Activated T-helper 1 cell treated with anti-CD3 and anti-CD28 coated beads, Interleukin-12 subunit alpha, Interleukin-12 subunit beta, Interleukin-2, Interleukin-4 antibody, amounts not matched to agents 30 ng/mL and 10 ng/mL and 1 ng/mL, durations not matched to agents 14 hours and 24 hours and 36 hours (primary cell): ENCODE measurements at regions of chr9 and their contacts with region 1.

Region 1: GRCh38 chr9:89536145-89536574 is 38.2 kb upstream of the SEMA4D start:
- DNase-seq: peak; percentile 41
- H3K4me3 Mint-ChIP-seq: peak overlapping the region; percentile 30
- H3K27ac Mint-ChIP-seq: peak overlapping the region; percentile 90
- H3K4me1 Mint-ChIP-seq: peaks cover 82% of the 10 kb centered on the region
- H3K27me3 Mint-ChIP-seq: no peaks in the 10 kb centered on the region

Region 2: DNA sequence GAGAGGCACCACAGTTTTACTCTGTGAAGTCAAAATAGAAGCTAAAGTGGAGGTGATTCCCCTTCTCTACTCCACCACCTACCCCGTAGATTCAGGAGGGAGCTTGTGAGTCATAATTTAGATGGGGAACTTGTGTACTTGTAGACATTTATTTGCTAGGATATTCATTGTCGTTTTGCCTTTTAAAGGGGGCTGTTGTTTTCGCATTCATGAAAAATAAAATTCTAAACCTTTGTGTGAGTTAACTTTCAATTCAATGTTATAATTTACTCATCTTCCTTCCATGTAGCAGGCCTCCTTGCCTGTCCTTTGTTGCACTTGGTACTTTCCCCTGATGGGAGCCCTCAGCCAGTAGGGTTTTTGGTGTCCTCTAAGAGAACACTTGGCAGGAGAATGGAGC is 195.8 kb before region 1 on chr9:
- intact Hi-C with region 1: loop called (anchors 5 kb)
- DNase-seq: no peak
- H3K4me3 Mint-ChIP-seq: no peak overlapping the region
- H3K27ac Mint-ChIP-seq: peak overlapping the region; percentile 60
- H3K4me1 Mint-ChIP-seq: peaks cover 35% of the 10 kb centered on the region
- H3K27me3 Mint-ChIP-seq: no peaks in the 10 kb centered on the region

Region 3: DNA sequence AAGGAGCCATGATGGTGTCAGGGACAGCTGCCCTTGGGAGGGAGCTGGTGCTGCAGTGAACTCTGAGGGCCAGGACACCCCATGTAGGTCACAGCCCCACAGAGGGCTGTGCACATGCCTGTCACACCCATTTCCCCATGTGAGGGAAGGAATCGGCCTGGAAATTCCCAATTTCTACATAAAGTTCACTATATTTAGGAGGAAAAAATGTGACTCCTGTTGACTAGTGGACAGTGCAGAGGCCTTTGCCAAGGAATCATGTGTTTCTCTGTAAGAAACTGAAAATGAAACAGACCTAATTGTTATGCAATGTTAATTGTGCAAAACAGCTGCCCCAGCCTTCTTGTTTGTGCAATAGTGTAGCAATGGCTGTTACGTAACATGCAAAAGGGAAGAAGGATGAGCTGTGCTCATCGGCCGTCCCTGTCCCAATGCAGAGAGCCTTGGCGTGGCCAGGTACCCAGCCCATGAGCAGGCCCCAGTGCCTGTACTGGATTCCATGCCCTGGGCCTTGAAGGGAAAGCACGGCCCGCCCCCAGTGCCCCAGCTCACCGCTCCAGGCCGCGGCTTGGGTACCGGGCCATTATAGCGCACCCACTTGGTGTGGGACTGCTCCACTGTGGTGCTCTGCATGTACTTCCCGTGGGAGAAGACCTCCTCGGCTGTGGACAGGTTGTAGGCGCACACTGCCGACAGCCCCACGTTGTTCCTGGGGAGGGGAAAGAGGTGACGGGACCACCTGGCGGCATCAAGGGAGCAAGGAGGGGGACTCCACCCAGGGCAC is 147.9 kb before region 1 on chr9:
- intact Hi-C with region 1: no loop called
- DNase-seq: no peak
- H3K4me3 Mint-ChIP-seq: no peak overlapping the region
- H3K27ac Mint-ChIP-seq: no peak overlapping the region
- H3K4me1 Mint-ChIP-seq: peaks cover 33% of the 10 kb centered on the region
- H3K27me3 Mint-ChIP-seq: peaks cover 2% of the 10 kb centered on the region

Region 4: GRCh38 chr9:89466451-89467277 is 69.5 kb before region 1 on chr9:
- intact Hi-C with region 1: loop called (anchors 1 kb)
- DNase-seq: peak; percentile 44
- H3K4me3 Mint-ChIP-seq: peak overlapping the region; percentile 73
- H3K27ac Mint-ChIP-seq: peak overlapping the region; percentile 98
- H3K4me1 Mint-ChIP-seq: peaks cover 93% of the 10 kb centered on the region
- H3K27me3 Mint-ChIP-seq: no peaks in the 10 kb centered on the region

Region 5: GRCh38 chr9:89497978-89498851 is 37.9 kb before region 1 on chr9 and contains the start of gene SEMA4D:
- intact Hi-C with region 1: loop called (anchors 1 kb)
- DNase-seq: peak; percentile 49
- H3K4me3 Mint-ChIP-seq: peak within 1 kb of the TSS; percentile 94
- H3K27ac Mint-ChIP-seq: peak within 1 kb of the TSS; percentile 94
- H3K4me1 Mint-ChIP-seq: peaks cover 89% of the 10 kb centered on the region
- H3K27me3 Mint-ChIP-seq: no peaks in the 10 kb centered on the region
- total RNA-seq, gene SEMA4D: 388 and 411 TPM in 2 replicates

Region 6: DNA sequence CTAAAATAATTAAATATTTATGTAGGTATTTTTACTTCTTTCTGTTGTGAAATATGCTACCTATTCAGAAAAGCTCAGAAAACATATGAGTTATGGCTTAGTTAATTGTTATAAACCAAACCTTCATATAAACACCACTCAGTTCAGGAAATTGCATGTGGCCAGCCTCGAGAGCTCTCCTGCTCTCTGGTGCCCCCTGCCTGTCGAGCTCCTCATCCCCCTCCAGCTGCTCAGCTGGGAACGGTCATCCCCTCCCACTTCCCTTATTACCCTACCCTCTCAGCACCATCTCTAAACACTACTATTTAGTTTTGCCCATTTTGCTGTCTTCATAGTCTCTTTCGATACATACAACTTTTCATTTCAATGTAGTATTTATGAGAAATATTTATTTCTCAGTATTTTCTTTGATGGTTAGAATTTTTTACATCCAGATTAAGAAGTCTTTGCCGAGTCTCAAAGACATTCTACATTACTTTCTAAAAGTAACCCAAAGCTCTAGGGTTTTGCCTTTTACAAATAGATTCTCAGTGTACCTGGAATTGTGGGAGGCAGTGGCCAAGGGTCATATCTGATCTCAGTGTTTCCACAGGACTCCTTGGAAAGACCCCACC is 13.0 kb after region 1 on chr9:
- intact Hi-C with region 1: loop called (anchors 1 kb)
- DNase-seq: peak; percentile 73
- H3K4me3 Mint-ChIP-seq: no peak overlapping the region
- H3K27ac Mint-ChIP-seq: peak overlapping the region; percentile 29
- H3K4me1 Mint-ChIP-seq: peaks cover 30% of the 10 kb centered on the region
- H3K27me3 Mint-ChIP-seq: peaks cover 15% of the 10 kb centered on the region